Mammary epithelial cell (primary cell): ENCODE measurements at regions of chr15 and their contacts with region 1.

Region 1: DNA sequence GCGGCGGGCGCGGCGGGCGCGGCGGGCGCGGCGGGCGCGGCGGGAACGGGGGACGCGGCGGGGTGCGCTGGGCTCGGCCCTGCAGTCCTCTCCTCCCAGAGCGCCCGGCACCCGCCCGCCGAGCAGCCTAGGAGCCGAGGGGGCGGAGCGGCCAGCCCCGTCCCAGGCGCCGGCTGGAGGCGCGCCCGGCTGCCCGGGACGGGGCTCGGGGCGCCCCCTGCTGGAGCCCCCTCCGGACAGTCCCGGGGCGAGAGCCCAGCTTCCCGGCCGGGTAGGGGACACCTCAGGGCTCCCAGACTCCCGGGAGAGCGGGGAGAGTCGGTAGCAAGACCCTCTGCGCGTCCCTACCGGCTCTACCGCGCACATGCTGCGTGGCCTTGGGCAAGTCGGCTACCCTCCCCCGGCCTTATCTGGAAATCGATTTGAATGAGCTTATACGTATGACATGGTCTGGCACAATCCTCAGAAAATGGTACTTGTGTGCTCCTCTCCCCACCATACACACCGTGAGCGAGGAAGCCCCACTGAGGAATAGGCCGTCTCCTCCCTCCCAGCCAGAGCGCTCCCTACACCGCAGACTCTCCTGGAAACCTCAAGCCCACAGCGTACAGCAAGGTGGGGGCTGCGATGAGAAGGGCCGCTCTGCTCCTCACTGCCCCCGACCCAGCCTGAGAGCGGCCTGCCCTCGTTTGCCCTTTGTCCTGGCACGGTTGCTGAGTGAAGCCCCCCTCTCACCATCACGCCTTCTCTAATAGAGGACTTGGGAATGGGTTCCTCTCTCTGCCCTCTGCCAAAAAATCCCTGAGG is at the start of gene DAPK2:
- DNase-seq: peak; percentile 56
- H3K4me3 ChIP-seq: peak within 1 kb of the TSS; percentile 26 to 64 (median 54)
- H3K27ac ChIP-seq: no peak within 1 kb of the TSS
- H3K4me1 ChIP-seq: peaks cover 8% of the 10 kb centered on the region
- H3K27me3 ChIP-seq: peaks cover 2% of the 10 kb centered on the region
- CTCF ChIP-seq: peak; percentile 27 to 73
- total RNA-seq, gene DAPK2: 0.82 to 2.3 TPM

Region 2: GRCh38 chr15:63752075-63752684 is 294.4 kb before region 1 on chr15:
- CTCF ChIA-PET with region 1: no interaction called
- dilution Hi-C with region 1: no loop called
- in situ Hi-C with region 1: no loop called
- intact Hi-C with region 1: loop called (anchors 1 kb)
- DNase-seq: peak; percentile 40
- H3K4me3 ChIP-seq: no peak overlapping the region
- H3K27ac ChIP-seq: no peak overlapping the region
- H3K4me1 ChIP-seq: no peaks in the 10 kb centered on the region
- H3K27me3 ChIP-seq: no peaks in the 10 kb centered on the region
- CTCF ChIP-seq: peak; percentile 80 to 83

Region 3: GRCh38 chr15:63891079-63891767 is 155.3 kb before region 1 on chr15:
- CTCF ChIA-PET with region 1: no interaction called
- dilution Hi-C with region 1: no loop called
- in situ Hi-C with region 1: no loop called
- intact Hi-C with region 1: loop called (anchors 1 kb)
- DNase-seq: peak; percentile 60
- H3K4me3 ChIP-seq: no peak overlapping the region
- H3K27ac ChIP-seq: no peak overlapping the region
- H3K4me1 ChIP-seq: peaks cover 2% of the 10 kb centered on the region
- H3K27me3 ChIP-seq: no peaks in the 10 kb centered on the region
- CTCF ChIP-seq: peak; percentile 74 to 86

Region 4: DNA sequence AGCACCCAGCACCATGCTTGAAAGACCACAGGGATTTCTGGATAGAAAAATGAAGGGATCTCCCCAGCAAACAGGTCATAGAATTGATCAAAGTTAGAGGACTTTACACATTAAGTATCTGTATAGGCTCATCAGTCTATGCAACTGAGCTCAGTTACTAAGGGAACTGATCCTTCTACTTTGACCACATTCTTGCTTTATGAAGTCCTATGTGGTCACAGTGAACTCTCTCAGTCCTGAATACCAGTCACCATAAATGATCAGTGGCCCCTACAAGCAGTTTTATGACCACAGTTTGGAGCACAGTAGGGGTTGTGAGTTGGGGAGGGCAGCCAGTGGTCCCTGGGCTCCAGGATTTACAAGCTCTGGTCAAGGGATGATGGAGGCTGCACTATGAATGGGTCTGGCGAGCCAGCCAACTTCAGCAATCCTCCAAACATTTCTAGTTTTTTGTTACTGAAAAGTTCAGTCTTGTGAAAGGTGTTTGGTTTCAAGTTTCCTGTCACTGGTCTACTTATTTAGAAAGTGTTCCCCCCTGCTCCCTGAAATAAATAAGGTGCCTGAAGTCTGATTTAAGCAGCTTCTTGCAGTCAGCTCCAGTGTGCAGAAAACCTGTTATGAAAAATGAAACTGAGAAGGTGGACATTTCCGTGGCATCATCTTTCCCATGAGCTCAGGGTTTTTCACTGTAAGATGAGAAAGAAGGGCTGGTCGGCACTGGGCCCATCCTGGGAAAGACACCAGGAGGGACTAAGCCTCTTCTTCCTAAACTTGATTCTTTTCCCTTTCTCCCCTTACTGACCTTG is 75.7 kb before region 1 on chr15:
- CTCF ChIA-PET with region 1: interaction called, 3 read pairs
- dilution Hi-C with region 1: no loop called
- in situ Hi-C with region 1: no loop called
- intact Hi-C with region 1: loop called (anchors 1 kb)
- DNase-seq: no peak
- H3K4me3 ChIP-seq: no peak overlapping the region
- H3K27ac ChIP-seq: no peak overlapping the region
- H3K4me1 ChIP-seq: peaks cover 17% of the 10 kb centered on the region
- H3K27me3 ChIP-seq: no peaks in the 10 kb centered on the region
- CTCF ChIP-seq: no peak

Region 5: GRCh38 chr15:63986751-63987341 is 59.7 kb before region 1 on chr15:
- CTCF ChIA-PET with region 1: no interaction called
- dilution Hi-C with region 1: no loop called
- in situ Hi-C with region 1: no loop called
- intact Hi-C with region 1: no loop called
- DNase-seq: no peak
- H3K4me3 ChIP-seq: no peak overlapping the region
- H3K27ac ChIP-seq: no peak overlapping the region
- H3K4me1 ChIP-seq: peaks cover 7% of the 10 kb centered on the region
- H3K27me3 ChIP-seq: no peaks in the 10 kb centered on the region
- CTCF ChIP-seq: no peak

Region 6: GRCh38 chr15:64105113-64105704 is 58.7 kb after region 1 on chr15:
- CTCF ChIA-PET with region 1: no interaction called
- dilution Hi-C with region 1: no loop called
- in situ Hi-C with region 1: no loop called
- intact Hi-C with region 1: no loop called
- DNase-seq: no peak
- H3K4me3 ChIP-seq: no peak overlapping the region
- H3K27ac ChIP-seq: no peak overlapping the region
- H3K4me1 ChIP-seq: no peaks in the 10 kb centered on the region
- H3K27me3 ChIP-seq: no peaks in the 10 kb centered on the region
- CTCF ChIP-seq: no peak

Region 7: GRCh38 chr15:64232400-64232799 is 185.8 kb after region 1 on chr15:
- CTCF ChIA-PET with region 1: no interaction called
- dilution Hi-C with region 1: no loop called
- in situ Hi-C with region 1: no loop called
- intact Hi-C with region 1: no loop called
- DNase-seq: peak; percentile 68
- H3K4me3 ChIP-seq: no peak overlapping the region
- H3K27ac ChIP-seq: no peak overlapping the region
- H3K4me1 ChIP-seq: peaks cover 10% of the 10 kb centered on the region
- H3K27me3 ChIP-seq: no peaks in the 10 kb centered on the region
- CTCF ChIP-seq: no peak